Pancreas (tissue), 10 donors: ENCODE measurements at regions of chr1 and their contacts with region 1.

Region 1: DNA sequence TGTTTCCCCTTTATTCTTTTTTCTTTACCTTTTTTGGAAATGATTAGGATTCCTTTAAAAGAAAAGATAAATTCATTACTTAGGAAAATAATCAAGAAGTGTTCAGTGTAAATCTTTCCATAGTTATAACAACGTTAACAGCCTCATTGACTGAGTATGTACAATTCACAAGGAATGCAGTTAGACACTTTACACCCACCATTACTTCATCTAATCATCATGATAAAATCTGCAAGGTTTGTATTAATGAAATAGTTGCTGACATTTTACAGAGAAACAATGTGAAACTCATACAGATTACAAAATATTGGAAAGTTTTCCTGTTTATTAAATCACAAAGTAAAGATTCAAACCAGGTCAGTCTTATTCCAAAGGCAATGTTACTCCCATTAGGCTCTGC is 59.3 kb upstream of the NEGR1 start:
- DNase-seq: no peak
- ATAC-seq: no peak
- H3K4me3 ChIP-seq: no peak overlapping the region
- H3K27ac ChIP-seq: no peak overlapping the region
- H3K4me1 ChIP-seq: no peaks in the 10 kb centered on the region
- H3K27me3 ChIP-seq: no peaks in the 10 kb centered on the region
- CTCF ChIP-seq: no peak

Region 2: GRCh38 chr1:72010094-72010431 is 331.6 kb before region 1 on chr1:
- intact Hi-C with region 1: no loop called
- DNase-seq: no peak
- ATAC-seq: no peak
- H3K4me3 ChIP-seq: no peak overlapping the region
- H3K27ac ChIP-seq: no peak overlapping the region
- H3K4me1 ChIP-seq: no peaks in the 10 kb centered on the region
- H3K27me3 ChIP-seq: no peaks in the 10 kb centered on the region
- CTCF ChIP-seq: no peak

Region 3: GRCh38 chr1:72296481-72296880 is 45.2 kb before region 1 on chr1:
- intact Hi-C with region 1: loop called in 1 of 3 experiments (anchors 5 kb)
- DNase-seq: no peak
- ATAC-seq: no peak
- H3K4me3 ChIP-seq: no peak overlapping the region
- H3K27ac ChIP-seq: no peak overlapping the region
- H3K4me1 ChIP-seq: no peaks in the 10 kb centered on the region
- H3K27me3 ChIP-seq: no peaks in the 10 kb centered on the region
- CTCF ChIP-seq: no peak